ENCODE measurements at regions of chr2 and their contacts with region 1.

Region 1: GRCh38 chr2:134118279-134119116 is 135.4 kb upstream of the MGAT5 start:
- DNase-seq: peak; percentile 90
- H3K4me3 ChIP-seq: no peak overlapping the region
- H3K27ac ChIP-seq: no peak overlapping the region
- H3K4me1 ChIP-seq: peaks cover 18% of the 10 kb centered on the region
- H3K27me3 ChIP-seq: no peaks in the 10 kb centered on the region
- CTCF ChIP-seq: peak; percentile 76 to 87

Region 2: GRCh38 chr2:133886735-133887660 is 231.5 kb before region 1 on chr2:
- CTCF ChIA-PET with region 1: interaction called, 3 read pairs
- dilution Hi-C with region 1: no loop called
- in situ Hi-C with region 1: no loop called
- intact Hi-C with region 1: loop called (anchors 1 kb)
- DNase-seq: peak; percentile 71
- H3K4me3 ChIP-seq: no peak overlapping the region
- H3K27ac ChIP-seq: no peak overlapping the region
- H3K4me1 ChIP-seq: peaks cover 16% of the 10 kb centered on the region
- H3K27me3 ChIP-seq: no peaks in the 10 kb centered on the region
- CTCF ChIP-seq: peak; percentile 61 to 73

Region 3: GRCh38 chr2:134207564-134208209 is 89.2 kb after region 1 on chr2:
- CTCF ChIA-PET with region 1: interaction called, 14 read pairs
- dilution Hi-C with region 1: no loop called
- in situ Hi-C with region 1: loop called in 1 of 2 experiments (anchors 5 kb)
- intact Hi-C with region 1: loop called (anchors 5 kb)
- DNase-seq: peak; percentile 43
- H3K4me3 ChIP-seq: no peak overlapping the region
- H3K27ac ChIP-seq: no peak overlapping the region
- H3K4me1 ChIP-seq: peaks cover 10% of the 10 kb centered on the region
- H3K27me3 ChIP-seq: no peaks in the 10 kb centered on the region
- CTCF ChIP-seq: peak; percentile 89 to 90

Region 4: DNA sequence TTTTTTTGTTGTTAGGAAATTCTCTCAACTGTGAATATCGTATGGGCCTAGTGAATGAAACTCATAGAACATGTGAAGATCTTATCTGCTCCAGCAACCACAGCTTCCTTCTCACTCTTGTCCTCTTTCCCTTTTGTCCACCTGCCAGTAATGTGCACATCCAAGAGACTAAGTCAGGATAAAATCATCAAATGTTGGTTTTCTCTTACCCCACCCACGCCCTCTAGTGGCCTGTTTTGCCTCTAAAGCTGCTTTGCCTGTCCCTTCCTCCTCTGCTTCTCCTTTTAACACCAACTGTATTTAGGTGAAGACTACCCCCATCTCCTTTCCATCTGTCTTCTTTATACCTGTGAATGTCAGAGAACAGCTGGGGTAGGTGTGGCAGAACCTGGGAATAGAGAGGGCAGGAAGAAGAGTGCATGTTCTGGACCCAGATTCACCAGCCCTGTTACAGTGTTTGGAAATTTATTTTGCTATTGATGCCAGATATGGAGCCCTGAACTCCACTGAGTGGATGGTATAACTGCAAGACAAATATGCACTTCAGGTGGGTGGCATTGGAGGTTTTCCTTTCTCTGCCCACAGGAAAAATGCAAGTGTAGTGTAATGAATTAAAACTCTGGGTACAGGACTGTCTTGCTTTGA is 127.0 kb after region 1 on chr2:
- CTCF ChIA-PET with region 1: interaction called, 6 read pairs
- dilution Hi-C with region 1: no loop called
- in situ Hi-C with region 1: loop called in 1 of 2 experiments (anchors 5 kb)
- intact Hi-C with region 1: loop called (anchors 1 kb)
- DNase-seq: peak; percentile 57
- H3K4me3 ChIP-seq: no peak overlapping the region
- H3K27ac ChIP-seq: no peak overlapping the region
- H3K4me1 ChIP-seq: peaks cover 5% of the 10 kb centered on the region
- H3K27me3 ChIP-seq: no peaks in the 10 kb centered on the region
- CTCF ChIP-seq: peak; percentile 78 to 89

Region 5: DNA sequence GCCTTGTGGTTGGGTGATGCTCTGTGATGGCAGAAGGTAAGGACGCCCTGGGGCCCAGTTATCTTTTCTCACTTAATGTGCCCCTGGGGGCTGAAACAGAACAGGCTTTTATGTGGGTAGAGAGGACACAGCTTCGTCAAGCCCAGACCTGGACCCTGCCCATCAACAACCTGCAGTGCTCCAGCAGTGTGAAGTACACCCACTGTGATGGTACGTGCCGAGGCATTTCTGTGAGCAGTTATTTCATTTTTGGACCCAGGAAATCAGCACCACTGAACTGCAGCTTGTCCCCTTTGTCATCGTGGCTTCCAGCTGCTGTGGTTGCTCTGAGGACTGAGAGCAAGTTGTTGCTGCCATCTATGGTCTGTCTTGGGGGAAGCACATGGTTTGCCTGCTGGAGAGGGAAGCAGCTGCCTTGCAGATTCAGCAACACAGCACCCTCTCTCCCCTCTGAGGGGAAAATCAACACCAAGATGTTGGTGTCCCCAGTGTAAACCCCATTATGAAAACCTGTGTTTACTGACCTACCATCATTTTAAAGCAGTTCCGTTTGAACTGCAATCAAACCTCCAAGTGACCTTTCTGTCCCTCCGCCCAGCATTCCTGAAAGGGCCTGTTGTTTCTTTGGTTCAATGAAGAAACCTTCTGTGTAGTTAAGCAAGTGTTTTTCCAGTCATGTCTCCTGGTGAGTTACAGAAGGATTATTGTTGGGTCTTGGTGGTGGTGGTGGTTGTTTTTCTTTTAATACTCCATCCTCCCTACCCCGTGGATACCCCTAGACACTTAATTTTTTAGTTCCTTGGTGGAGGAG is 293.5 kb after region 1 on chr2:
- CTCF ChIA-PET with region 1: interaction called, 12 read pairs
- dilution Hi-C with region 1: no loop called
- in situ Hi-C with region 1: loop called (anchors 10 to 25 kb)
- intact Hi-C with region 1: loop called (anchors 1 kb)
- DNase-seq: peak; percentile 67
- H3K4me3 ChIP-seq: no peak overlapping the region
- H3K27ac ChIP-seq: no peak overlapping the region
- H3K4me1 ChIP-seq: peaks cover 38% of the 10 kb centered on the region
- H3K27me3 ChIP-seq: no peaks in the 10 kb centered on the region
- CTCF ChIP-seq: peak; percentile 77 to 84

Region 6: DNA sequence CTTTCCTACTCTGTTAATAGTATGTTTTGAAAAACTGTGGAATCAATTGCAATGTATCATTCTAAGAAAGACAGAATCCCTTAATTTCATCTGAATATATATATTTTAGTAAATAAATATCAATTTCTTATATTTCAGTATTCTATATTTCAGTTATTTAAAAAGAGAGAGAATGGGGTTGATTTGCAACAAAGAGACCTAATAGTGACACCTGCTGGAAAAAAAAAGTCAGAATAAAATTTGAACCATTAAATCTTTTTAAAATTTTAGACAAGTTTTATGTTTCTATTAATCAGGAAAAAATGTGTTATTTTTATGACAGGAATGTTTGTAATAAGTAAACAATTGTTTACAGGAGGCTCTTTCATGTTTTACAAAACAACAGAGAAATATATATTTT is 779.4 kb after region 1 on chr2:
- CTCF ChIA-PET with region 1: no interaction called
- dilution Hi-C with region 1: no loop called
- in situ Hi-C with region 1: loop called in 1 of 2 experiments (anchors 25 kb)
- intact Hi-C with region 1: loop called (anchors 5 kb)
- DNase-seq: no peak
- H3K4me3 ChIP-seq: no peak overlapping the region
- H3K27ac ChIP-seq: no peak overlapping the region
- H3K4me1 ChIP-seq: no peaks in the 10 kb centered on the region
- H3K27me3 ChIP-seq: no peaks in the 10 kb centered on the region
- CTCF ChIP-seq: peak; percentile 21 to 44

Measured in mammary epithelial cell (primary cell).